Spleen (tissue), 13 donors: ENCODE measurements at regions of chr15 and their contacts with region 1.

Region 1: GRCh38 chr15:34927726-34928125 is 41.8 kb downstream of the AQR start:
- DNase-seq: no peak
- H3K4me3 ChIP-seq: no peak overlapping the region
- H3K27ac ChIP-seq: no peak overlapping the region
- H3K4me1 ChIP-seq: no peaks in the 10 kb centered on the region
- H3K27me3 ChIP-seq: no peaks in the 10 kb centered on the region
- CTCF ChIP-seq: no peak
- POLR2A ChIP-seq: no peak

Region 2: GRCh38 chr15:34621675-34622074 is 306.1 kb before region 1 on chr15:
- intact Hi-C with region 1: loop called (anchors 10 kb)
- DNase-seq: no peak
- H3K4me3 ChIP-seq: no peak overlapping the region
- H3K27ac ChIP-seq: no peak overlapping the region
- H3K4me1 ChIP-seq: peaks cover 0 to 12% (median 6%) of the 10 kb centered on the region in 6 donors
- H3K27me3 ChIP-seq: peaks cover 0 to 22% (median 0%) of the 10 kb centered on the region in 7 donors
- CTCF ChIP-seq: peak in 3 of 11 experiments; percentile 8 to 18 (median 13)
- POLR2A ChIP-seq: no peak

Region 3: DNA sequence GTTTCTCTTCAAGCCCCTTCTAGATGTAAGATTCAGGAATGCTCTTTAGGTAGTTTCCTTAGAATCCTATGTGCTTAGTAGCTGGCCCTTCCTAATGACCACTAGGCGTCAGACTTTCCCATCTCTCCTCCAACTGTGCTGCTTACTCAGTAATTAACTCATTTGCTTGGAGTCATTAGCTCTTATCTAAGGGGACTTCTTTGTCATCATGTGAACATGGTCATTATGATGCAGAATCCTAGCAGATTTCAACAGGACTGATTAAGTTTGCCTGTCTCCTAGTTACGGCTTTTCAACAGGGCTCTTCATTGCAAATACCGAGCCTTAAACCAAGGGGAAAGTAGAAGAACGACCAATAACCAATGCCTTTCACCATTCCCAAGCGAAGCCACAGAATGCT is 219.3 kb before region 1 on chr15:
- intact Hi-C with region 1: loop called (anchors 5 kb)
- DNase-seq: no peak
- H3K4me3 ChIP-seq: no peak overlapping the region
- H3K27ac ChIP-seq: no peak overlapping the region
- H3K4me1 ChIP-seq: no peaks in the 10 kb centered on the region
- H3K27me3 ChIP-seq: peaks cover 0 to 18% (median 0%) of the 10 kb centered on the region in 7 donors
- CTCF ChIP-seq: peak in 8 of 11 experiments; percentile 22 to 51 (median 40)
- POLR2A ChIP-seq: no peak

Region 4: GRCh38 chr15:35186346-35186745 is 258.6 kb after region 1 on chr15:
- intact Hi-C with region 1: no loop called
- DNase-seq: no peak
- H3K4me3 ChIP-seq: no peak overlapping the region
- H3K27ac ChIP-seq: no peak overlapping the region
- H3K4me1 ChIP-seq: no peaks in the 10 kb centered on the region
- H3K27me3 ChIP-seq: no peaks in the 10 kb centered on the region
- CTCF ChIP-seq: no peak
- POLR2A ChIP-seq: no peak